ENCODE measurements at regions of chr22 and their contacts with region 1.

Region 1: GRCh38 chr22:50326959-50327710 is at the start of gene DENND6B:
- DNase-seq: no peak
- H3K4me3 ChIP-seq: peak within 1 kb of the TSS; percentile 65
- H3K27me3 ChIP-seq: no peaks in the 10 kb centered on the region
- CTCF ChIP-seq: no peak
- polyA plus RNA-seq, gene DENND6B: 3.7 and 8.2 TPM in 2 replicates

Region 2: GRCh38 chr22:50225200-50225969 is 101.8 kb before region 1 on chr22:
- CTCF ChIA-PET with region 1: no interaction called
- POLR2A ChIA-PET with region 1: no interaction called
- DNase-seq: no peak
- H3K4me3 ChIP-seq: no peak overlapping the region
- H3K27me3 ChIP-seq: no peaks in the 10 kb centered on the region
- CTCF ChIP-seq: no peak

Region 3: GRCh38 chr22:50250555-50251476 is 76.3 kb before region 1 on chr22 and contains the start of gene HDAC10:
- CTCF ChIA-PET with region 1: interaction called, 23 read pairs
- POLR2A ChIA-PET with region 1: no interaction called
- DNase-seq: no peak
- H3K4me3 ChIP-seq: peak within 1 kb of the TSS; percentile 65
- H3K27me3 ChIP-seq: no peaks in the 10 kb centered on the region
- CTCF ChIP-seq: no peak
- polyA plus RNA-seq, gene HDAC10: 8.8 and 18.2 TPM in 2 replicates

Region 4: DNA sequence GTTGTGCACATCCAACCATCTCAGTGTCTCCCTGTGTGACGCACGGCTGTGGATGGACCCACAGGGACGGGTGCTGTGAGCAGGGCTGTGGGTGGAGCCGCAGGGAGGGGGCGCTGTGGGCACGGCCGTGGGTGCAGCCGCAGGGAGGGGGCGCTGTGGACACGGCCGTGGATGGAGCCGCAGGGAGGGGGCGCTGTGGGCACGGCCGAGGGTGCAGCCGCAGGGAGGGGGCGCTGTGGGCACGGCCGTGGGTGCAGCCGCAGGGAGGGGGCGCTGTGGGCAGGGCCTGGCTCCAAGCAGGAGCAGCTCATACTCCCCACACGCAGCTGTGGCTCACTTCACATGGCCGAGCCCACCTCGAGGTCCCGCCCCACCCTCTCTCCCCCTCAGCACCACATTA is 51.0 kb before region 1 on chr22:
- CTCF ChIA-PET with region 1: interaction called, 78 read pairs
- POLR2A ChIA-PET with region 1: no interaction called
- DNase-seq: no peak
- H3K4me3 ChIP-seq: no peak overlapping the region
- H3K27me3 ChIP-seq: no peaks in the 10 kb centered on the region
- CTCF ChIP-seq: peak; percentile 48

Region 5: DNA sequence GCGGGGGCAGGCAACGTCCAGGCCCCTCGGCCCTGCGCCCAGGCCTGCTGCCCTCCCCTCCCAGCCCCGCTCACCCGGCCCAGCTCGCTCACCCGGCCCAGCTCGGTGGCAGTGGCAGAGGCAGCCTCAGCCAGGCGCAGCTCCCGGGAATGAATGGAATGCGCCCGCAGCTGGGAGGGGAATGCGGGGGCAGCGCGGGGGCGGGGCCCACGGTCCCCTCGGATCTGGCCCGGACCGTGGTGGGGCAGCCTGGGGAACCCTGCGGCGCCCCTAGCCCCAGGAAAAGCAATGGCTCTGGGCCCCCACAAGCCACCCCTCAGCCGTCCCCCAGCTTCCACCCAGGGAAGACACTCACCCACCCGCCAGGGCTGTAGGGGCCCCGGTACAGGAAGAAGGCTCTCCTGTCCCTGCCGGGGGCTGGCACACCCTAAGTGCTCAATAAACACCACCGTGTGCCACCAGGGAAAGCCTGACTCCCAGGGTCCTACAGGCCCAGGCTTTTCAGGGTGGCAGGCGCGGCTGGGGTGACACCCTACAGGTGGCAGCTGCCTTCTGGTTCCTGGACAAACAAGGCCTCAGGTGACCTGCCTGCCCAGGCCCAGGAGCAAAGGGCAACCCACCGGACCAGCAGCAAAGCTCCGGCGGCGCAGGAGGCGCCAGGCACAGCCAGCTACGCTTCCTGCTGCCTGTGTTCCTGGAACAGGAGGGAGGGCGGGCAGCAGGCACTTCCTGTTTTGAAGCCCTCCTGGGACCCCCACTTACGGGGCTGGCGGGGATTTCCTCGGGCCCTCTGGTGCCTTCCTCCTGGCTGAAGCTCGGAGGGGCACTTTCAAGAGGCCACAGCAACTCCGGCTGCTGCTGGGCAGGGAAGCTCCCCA is 33.5 kb before region 1 on chr22:
- CTCF ChIA-PET with region 1: interaction called, 19 read pairs
- POLR2A ChIA-PET with region 1: interaction called, 3 read pairs
- DNase-seq: no peak
- H3K4me3 ChIP-seq: peak overlapping the region; percentile 25
- H3K27me3 ChIP-seq: no peaks in the 10 kb centered on the region
- CTCF ChIP-seq: no peak

Region 6: GRCh38 chr22:50306753-50307749 is 20.1 kb before region 1 on chr22 and contains the start of gene PLXNB2:
- CTCF ChIA-PET with region 1: interaction called, 36 read pairs
- POLR2A ChIA-PET with region 1: no interaction called
- DNase-seq: no peak
- H3K4me3 ChIP-seq: peak within 1 kb of the TSS; percentile 98
- H3K27me3 ChIP-seq: no peaks in the 10 kb centered on the region
- CTCF ChIP-seq: no peak
- polyA plus RNA-seq, gene PLXNB2: 83.7 and 143 TPM in 2 replicates

Region 7: GRCh38 chr22:50314455-50315288 is 12.5 kb before region 1 on chr22:
- CTCF ChIA-PET with region 1: interaction called, 36 read pairs
- POLR2A ChIA-PET with region 1: no interaction called
- DNase-seq: no peak
- H3K4me3 ChIP-seq: no peak overlapping the region
- H3K27me3 ChIP-seq: no peaks in the 10 kb centered on the region
- CTCF ChIP-seq: no peak

Region 8: GRCh38 chr22:50341977-50342650 is 15.0 kb after region 1 on chr22:
- CTCF ChIA-PET with region 1: interaction called, 15 read pairs
- POLR2A ChIA-PET with region 1: no interaction called
- DNase-seq: no peak
- H3K4me3 ChIP-seq: peak overlapping the region; percentile 81
- H3K27me3 ChIP-seq: no peaks in the 10 kb centered on the region
- CTCF ChIP-seq: peak; percentile 98

Region 9: GRCh38 chr22:50548040-50548912 is 221.1 kb after region 1 on chr22:
- CTCF ChIA-PET with region 1: no interaction called
- POLR2A ChIA-PET with region 1: no interaction called
- DNase-seq: no peak
- H3K4me3 ChIP-seq: no peak overlapping the region
- H3K27me3 ChIP-seq: peaks cover 31% of the 10 kb centered on the region
- CTCF ChIP-seq: no peak